Activated naive CD4-positive, alpha-beta T cell treated with anti-CD3 and anti-CD28 coated beads for 36 hours (primary cell): ENCODE measurements at regions of chr19 and their contacts with region 1.

Region 1: DNA sequence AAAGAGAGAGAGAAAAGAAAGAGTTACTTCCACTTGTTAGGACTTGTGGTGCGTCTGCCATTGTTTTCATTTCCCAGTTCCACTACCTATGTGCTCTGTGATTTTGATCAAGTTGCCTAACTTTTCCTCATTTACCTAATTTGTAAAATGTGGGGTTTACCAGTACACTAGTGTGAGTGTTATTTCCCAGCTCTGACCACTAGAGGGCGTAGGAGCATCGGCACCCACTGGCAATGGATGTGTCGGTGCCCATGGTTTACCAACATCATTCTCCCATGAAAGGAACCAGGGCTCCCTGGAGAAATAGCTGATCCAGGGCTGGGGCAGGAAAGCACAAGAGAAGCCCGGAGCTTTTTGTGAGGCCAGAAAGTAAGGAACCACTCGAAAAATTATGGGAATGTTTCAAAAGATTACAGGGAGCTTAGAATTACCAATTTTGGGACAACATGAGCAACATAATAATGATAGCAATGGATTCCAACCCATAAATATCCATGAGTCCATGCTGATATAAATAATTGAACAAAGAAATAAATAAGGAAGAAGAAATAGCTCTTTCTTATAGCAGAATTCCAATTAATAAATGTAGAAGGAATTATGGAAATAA is 15.1 kb upstream of the CEACAM4 start:
- DNase-seq: peak; percentile 85
- H3K4me3 Mint-ChIP-seq: no peak overlapping the region
- H3K27ac Mint-ChIP-seq: no peak overlapping the region
- H3K4me1 Mint-ChIP-seq: peaks cover 29% of the 10 kb centered on the region
- H3K27me3 Mint-ChIP-seq: peaks cover 1% of the 10 kb centered on the region

Region 2: DNA sequence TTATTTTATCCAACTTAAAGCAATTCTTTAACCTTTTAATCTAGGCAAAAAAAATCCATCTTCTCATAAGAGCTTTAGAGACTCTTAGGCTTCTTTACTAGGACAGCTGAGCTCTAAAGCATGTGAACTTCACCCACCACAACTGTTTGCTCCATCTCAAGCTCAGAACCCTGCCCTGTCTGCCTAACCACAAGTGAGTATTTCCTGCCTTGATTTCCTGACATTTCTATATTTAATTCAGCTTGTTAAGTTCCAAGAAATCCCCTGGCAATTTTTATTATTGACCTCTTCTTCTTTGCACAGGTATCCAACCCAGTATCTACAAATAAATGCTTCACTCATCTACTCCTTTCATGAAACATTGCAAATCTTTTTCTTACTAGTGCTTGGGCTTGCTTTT is 87.1 kb before region 1 on chr19:
- CTCF ChIA-PET with region 1: no interaction called
- intact Hi-C with region 1: no loop called
- DNase-seq: peak; percentile 60
- H3K4me3 Mint-ChIP-seq: peak overlapping the region; percentile 37
- H3K27ac Mint-ChIP-seq: peak overlapping the region; percentile 100
- H3K4me1 Mint-ChIP-seq: peaks cover 66% of the 10 kb centered on the region
- H3K27me3 Mint-ChIP-seq: no peaks in the 10 kb centered on the region

Region 3: GRCh38 chr19:41657157-41657556 is 15.2 kb after region 1 on chr19:
- CTCF ChIA-PET with region 1: interaction called, 40 read pairs
- intact Hi-C with region 1: no loop called
- DNase-seq: peak; percentile 14
- H3K4me3 Mint-ChIP-seq: no peak overlapping the region
- H3K27ac Mint-ChIP-seq: no peak overlapping the region
- H3K4me1 Mint-ChIP-seq: peaks cover 2% of the 10 kb centered on the region
- H3K27me3 Mint-ChIP-seq: peaks cover 42% of the 10 kb centered on the region

Region 4: DNA sequence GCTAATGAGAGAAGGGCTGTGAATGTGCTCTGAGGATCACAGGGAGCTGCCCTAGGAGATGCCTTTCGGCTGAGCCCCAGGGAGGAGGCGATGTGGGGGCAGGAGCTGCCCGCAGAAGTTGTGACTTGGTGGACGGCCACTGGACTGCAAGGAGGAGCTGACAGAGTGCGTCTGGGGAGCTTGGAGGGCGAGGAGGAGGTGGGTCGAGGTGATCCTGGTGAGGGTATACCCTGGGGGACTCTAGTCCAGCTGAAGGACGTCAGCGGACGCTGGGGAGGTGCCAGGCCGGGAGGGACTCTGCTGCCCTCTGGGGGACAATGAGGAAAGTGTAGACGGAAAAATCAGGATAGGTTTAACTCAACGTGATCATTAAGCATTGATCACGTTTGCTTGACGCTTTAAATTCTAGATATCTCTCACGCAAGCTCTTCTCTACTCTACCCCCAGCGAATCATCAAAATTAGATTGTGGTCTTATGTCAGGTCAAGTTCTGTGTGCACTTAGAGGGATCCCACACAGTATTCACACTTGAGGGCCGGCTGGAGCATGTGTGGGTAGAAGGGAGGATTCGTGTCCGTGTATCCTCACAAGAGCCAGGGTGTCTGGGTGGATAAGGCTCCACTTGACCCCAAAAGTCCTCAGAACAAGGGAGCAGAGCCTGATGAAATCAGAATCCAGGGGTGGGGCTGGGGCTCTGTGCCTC is 49.4 kb after region 1 on chr19:
- CTCF ChIA-PET with region 1: interaction called, 48 read pairs
- intact Hi-C with region 1: loop called (anchors 5 kb)
- DNase-seq: peak; percentile 50
- H3K4me3 Mint-ChIP-seq: no peak overlapping the region
- H3K27ac Mint-ChIP-seq: no peak overlapping the region
- H3K4me1 Mint-ChIP-seq: no peaks in the 10 kb centered on the region
- H3K27me3 Mint-ChIP-seq: peaks cover 25% of the 10 kb centered on the region

Region 5: GRCh38 chr19:41701401-41702075 is 59.6 kb after region 1 on chr19:
- CTCF ChIA-PET with region 1: interaction called, 17 read pairs
- intact Hi-C with region 1: loop called (anchors 5 kb)
- DNase-seq: peak; percentile 23
- H3K4me3 Mint-ChIP-seq: no peak overlapping the region
- H3K27ac Mint-ChIP-seq: no peak overlapping the region
- H3K4me1 Mint-ChIP-seq: no peaks in the 10 kb centered on the region
- H3K27me3 Mint-ChIP-seq: peaks cover 18% of the 10 kb centered on the region

Region 6: GRCh38 chr19:41746593-41747227 is 104.7 kb after region 1 on chr19:
- CTCF ChIA-PET with region 1: interaction called, 14 read pairs
- intact Hi-C with region 1: loop called (anchors 5 kb)
- DNase-seq: peak; percentile 78
- H3K4me3 Mint-ChIP-seq: no peak overlapping the region
- H3K27ac Mint-ChIP-seq: no peak overlapping the region
- H3K4me1 Mint-ChIP-seq: peaks cover under 1% of the 10 kb centered on the region
- H3K27me3 Mint-ChIP-seq: peaks cover 47% of the 10 kb centered on the region